WTC11 (cell line): ENCODE measurements at regions of chr2 and their contacts with region 1.

Region 1: GRCh38 chr2:147331790-147332419 is 512.9 kb upstream of the ACVR2A start:
- DNase-seq: peak; percentile 45
- ATAC-seq: peak; percentile 74
- H3K4me3 Mint-ChIP-seq: no peak overlapping the region
- H3K27ac Mint-ChIP-seq: no peak overlapping the region
- H3K4me1 Mint-ChIP-seq: 0 out of 2 replicates have a peak, but pooled peaks cover 2% of the 10 kb centered on the region
- H3K27me3 Mint-ChIP-seq: no peaks in the 10 kb centered on the region
- CTCF ChIP-seq: peak; percentile 58; the same call in 1 of the 2 replicates

Region 2: DNA sequence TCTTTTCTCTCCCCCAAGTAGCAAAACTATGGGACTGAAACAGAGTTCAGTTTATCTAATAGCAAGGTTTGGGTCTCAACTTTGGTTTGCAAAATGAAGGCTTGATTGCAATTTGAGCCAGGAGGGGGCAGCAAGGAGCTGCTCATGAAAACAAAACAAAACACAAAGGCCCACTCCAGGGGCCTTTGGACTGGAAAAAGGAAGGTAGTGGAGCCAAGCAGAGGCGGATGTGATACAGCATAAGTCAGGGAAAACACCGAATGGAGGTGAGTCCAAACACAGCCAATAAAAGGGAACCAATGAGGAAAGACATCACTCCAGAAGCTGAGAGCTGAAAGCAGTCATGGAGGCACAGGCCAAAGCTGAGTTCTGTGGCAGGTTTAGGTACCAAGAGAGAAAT is 286.8 kb before region 1 on chr2:
- CTCF ChIA-PET with region 1: interaction called, 19 read pairs
- POLR2A ChIA-PET with region 1: no interaction called
- DNase-seq: peak; percentile 76
- ATAC-seq: peak; percentile 91
- H3K4me3 Mint-ChIP-seq: no peak overlapping the region
- H3K27ac Mint-ChIP-seq: peak overlapping the region; percentile 32; the same call in 1 of the 2 replicates
- H3K4me1 Mint-ChIP-seq: peaks cover 23% of the 10 kb centered on the region
- H3K27me3 Mint-ChIP-seq: no peaks in the 10 kb centered on the region
- CTCF ChIP-seq: peak; percentile 65

Region 3: DNA sequence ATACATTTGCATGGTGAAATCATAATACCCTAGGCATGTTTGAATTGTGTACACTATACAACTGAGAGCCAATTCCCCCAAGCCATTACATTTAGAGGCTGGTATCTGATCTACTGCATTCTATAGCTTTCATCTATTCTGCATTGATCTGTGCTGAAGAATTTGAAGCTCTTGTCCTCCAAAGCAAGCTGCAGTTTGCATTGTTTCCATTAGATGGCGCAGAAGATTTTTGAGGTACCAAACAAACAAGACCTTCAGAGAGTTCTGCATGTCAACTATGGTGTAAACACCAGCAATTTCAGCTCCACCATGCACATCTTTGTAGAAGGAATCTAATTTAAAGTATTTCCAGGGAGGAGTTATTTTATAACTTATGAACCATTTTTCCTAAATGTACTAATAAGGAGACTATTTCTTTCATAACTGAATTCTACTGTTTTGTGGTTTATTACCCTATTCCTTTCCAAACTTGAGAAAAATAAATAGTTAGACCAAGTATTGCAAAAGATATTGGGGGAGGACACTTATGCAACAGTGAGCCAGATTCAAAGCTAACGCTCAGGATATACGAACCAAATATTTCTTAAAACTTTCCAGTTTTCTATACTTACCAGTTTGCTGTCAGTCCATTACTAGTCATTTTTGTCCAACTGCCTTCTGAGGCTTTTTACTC is 248.9 kb before region 1 on chr2:
- CTCF ChIA-PET with region 1: interaction called, 16 read pairs
- POLR2A ChIA-PET with region 1: no interaction called
- DNase-seq: peak; percentile 69
- ATAC-seq: peak; percentile 86
- H3K4me3 Mint-ChIP-seq: no peak overlapping the region
- H3K27ac Mint-ChIP-seq: no peak overlapping the region
- H3K4me1 Mint-ChIP-seq: no peaks in the 10 kb centered on the region
- H3K27me3 Mint-ChIP-seq: no peaks in the 10 kb centered on the region
- CTCF ChIP-seq: peak; percentile 80